Activated CD4-positive, alpha-beta T cell treated with anti-CD3 and anti-CD28 coated beads, Interleukin-2, amount 10 ng/mL, durations not matched to agents 24 days and 14 days (primary cell): ENCODE measurements at regions of chr5 and their contacts with region 1.

Region 1: DNA sequence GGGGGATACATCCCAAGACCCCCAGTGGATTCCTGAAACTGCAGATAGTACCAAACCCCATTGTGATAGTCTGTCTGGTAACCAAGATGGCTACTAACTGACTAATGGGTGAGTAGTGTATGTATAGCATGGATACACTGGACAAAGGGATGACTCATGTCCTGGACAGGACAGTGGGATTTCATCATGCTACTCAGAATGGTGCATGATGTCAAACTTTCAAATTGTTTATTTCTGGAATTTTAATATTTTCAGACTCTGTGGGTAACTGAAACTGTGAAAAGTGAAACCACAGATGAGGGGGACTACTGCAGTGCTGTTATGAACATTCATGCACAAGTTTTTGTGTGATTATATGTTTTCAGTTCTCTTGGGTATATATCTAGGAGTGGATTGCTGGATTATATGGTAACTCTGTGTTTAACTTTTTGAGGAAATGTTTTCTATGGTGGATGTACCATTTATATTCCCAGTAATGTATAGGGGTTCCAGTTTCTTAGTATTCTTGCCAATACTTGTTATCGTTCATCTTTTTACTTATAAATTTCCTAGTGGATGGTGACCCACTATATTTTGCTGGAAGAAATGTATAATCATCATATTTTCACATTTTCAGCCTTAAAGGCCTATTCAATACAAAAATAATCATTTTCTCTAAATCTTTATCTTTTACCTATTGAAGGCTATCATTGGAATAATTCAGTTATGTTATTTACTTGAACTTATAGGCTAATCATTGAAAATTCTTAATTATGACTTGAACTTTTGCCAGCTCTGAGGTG is 140.9 kb downstream of the NR3C1 start:
- DNase-seq: no peak
- H3K4me3 Mint-ChIP-seq: no peak overlapping the region
- H3K27ac Mint-ChIP-seq: no peak overlapping the region
- H3K4me1 Mint-ChIP-seq: peaks cover 12% of the 10 kb centered on the region
- H3K27me3 Mint-ChIP-seq: no peaks in the 10 kb centered on the region

Region 2: DNA sequence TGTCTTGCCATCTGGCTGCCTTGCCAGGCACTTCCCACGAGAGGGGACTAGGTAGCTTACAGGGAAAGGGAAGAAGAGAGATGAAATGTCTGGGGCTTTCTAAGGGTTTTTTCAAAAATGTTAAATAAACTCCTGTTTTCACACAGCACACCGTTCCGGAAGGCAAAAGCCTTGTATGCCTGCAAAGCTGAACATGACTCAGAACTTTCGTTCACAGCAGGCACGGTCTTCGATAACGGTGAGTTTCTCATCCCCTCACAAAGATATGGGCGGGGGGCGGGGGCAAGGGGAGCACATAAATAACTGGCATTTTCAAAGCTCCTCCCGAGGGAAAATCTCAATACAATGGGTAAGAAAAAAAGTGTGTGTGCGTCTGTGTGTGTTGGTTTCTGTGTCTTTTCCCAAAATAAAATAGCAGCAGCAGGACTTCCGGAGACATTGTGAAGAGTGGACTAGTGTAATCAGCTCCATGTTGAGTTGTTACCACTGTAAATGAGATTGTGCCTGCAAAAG is 48.7 kb before region 1 on chr5:
- intact Hi-C with region 1: loop called (anchors 5 kb)
- DNase-seq: no peak
- H3K4me3 Mint-ChIP-seq: peak overlapping the region; percentile 24
- H3K27ac Mint-ChIP-seq: peak overlapping the region; percentile 76
- H3K4me1 Mint-ChIP-seq: peaks cover 28% of the 10 kb centered on the region
- H3K27me3 Mint-ChIP-seq: no peaks in the 10 kb centered on the region

Region 3: DNA sequence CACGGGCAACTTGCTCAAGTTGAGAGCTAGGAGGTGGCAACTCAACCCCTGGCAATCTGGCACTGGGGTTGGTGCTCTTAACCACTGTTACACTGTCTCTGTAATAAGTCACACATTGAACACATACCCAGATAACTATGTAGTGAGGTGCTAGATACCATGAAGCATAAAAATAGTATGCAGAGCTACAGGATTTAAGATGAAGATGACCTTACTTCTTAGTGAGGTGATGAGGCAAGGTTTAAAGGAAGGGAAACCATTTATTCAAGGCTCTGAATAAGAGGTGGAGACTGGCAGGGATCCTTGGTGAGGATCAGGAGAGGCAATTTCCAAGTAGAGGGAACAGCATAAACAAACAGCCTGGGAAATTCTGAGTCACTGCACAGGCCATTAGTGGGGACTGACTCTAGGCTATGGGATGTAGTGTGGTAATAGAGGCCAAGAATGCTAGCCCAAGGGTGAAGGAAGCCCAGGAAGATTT is 208.5 kb after region 1 on chr5:
- intact Hi-C with region 1: no loop called
- DNase-seq: no peak
- H3K4me3 Mint-ChIP-seq: no peak overlapping the region
- H3K27ac Mint-ChIP-seq: no peak overlapping the region
- H3K4me1 Mint-ChIP-seq: no peaks in the 10 kb centered on the region
- H3K27me3 Mint-ChIP-seq: no peaks in the 10 kb centered on the region